ENCODE measurements at regions of chr12 and their contacts with region 1.

Region 1: GRCh38 chr12:53086361-53086760 is 7.2 kb upstream of the SPRYD3 start:
- DNase-seq: no peak
- H3K4me3 ChIP-seq: no peak overlapping the region
- H3K27ac ChIP-seq: no peak overlapping the region
- H3K4me1 ChIP-seq: no peaks in the 10 kb centered on the region
- H3K27me3 ChIP-seq: peaks cover 5 to 9% of the 10 kb centered on the region in 2 experiments
- CTCF ChIP-seq: no peak
- POLR2A ChIP-seq: no peak

Region 2: DNA sequence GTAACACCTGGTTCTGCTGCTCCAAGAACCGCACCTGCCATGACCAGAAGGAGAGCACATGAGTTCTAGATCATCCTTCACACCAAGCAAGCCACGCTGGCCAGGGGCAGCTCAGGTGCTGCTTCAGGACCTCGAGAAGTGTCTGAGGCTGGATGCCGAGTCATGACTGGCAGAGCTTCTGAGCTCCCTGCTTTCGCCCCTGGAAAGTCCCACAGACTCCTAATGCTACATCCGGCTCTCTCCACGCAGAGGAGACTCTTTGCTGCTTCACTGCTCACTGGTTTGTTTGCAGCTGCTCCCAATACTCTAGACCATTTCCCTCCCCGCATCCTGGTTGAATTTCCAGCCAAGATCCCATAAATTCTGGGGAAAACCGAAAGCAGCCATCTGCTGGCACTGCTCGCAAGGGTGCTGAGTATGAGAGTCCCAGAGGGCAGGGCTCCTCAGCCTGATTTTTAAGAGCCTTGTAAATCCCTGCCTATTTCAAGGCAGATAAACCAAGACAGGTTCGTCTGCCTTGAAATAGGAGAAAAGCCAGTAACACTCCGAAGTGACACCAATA is 435.8 kb before region 1 on chr12:
- CTCF ChIA-PET with region 1: no interaction called
- POLR2A ChIA-PET with region 1: no interaction called
- dilution Hi-C with region 1: no loop called
- intact Hi-C with region 1: no loop called
- DNase-seq: no peak
- H3K4me3 ChIP-seq: no peak overlapping the region
- H3K27ac ChIP-seq: no peak overlapping the region
- H3K4me1 ChIP-seq: no peaks in the 10 kb centered on the region
- H3K27me3 ChIP-seq: peaks cover 7 to 8% of the 10 kb centered on the region in 2 experiments
- CTCF ChIP-seq: no peak
- POLR2A ChIP-seq: no peak

Region 3: GRCh38 chr12:52836042-52836466 is 250.3 kb before region 1 on chr12:
- CTCF ChIA-PET with region 1: no interaction called
- POLR2A ChIA-PET with region 1: no interaction called
- dilution Hi-C with region 1: no loop called
- intact Hi-C with region 1: no loop called
- DNase-seq: peak; percentile 40
- H3K4me3 ChIP-seq: no peak overlapping the region
- H3K27ac ChIP-seq: no peak overlapping the region
- H3K4me1 ChIP-seq: peaks cover 4% of the 10 kb centered on the region
- H3K27me3 ChIP-seq: no peaks in the 10 kb centered on the region
- CTCF ChIP-seq: no peak
- POLR2A ChIP-seq: no peak

Region 4: DNA sequence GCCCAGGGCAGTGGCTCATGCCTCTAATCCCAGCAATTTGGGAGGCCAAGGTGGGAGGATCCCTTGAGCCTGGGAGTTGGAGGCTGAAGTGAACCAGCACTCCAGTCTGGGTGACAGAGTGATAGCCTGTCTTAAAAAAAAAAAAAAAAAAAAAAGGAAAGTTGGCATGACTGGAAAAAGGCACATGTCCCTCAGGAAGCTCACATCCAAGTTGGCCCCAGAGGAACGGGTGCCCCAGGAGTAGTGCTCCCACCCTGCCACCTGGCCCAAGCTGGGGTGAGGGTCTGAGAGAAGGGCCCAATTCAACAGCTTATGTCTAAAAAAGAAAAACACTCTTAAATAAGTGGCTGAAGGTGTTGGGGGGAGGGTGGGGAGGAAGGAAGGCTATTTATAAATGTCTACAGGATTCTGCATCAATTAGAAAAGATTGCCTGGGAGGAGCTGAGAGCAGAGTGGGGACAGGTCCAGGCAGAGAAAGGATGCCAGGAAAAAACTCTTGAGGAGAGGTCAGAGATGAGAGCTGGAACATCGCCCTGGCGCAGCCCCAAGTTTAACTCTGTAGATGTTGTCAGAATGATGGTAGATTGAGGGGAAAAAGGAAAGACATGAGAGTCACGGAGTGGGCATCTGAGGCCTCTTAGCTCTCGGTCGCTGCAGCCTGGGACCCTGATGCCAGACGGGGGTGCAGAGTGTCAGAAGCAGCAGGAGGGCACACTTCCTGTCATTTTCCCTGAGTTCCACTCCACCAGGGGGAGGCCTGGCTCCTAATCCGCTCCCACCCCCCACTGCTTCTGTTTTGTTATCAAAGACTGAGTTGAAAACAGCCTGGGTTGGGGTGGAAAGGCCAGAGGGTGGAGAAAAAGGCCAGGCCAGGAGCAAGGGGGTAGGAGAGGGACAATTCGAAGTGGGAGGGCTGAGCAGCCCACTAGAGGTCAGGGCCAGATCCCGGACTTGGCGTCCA is 14.5 kb before region 1 on chr12:
- CTCF ChIA-PET with region 1: interaction called, 91 read pairs
- POLR2A ChIA-PET with region 1: no interaction called
- dilution Hi-C with region 1: no loop called
- intact Hi-C with region 1: no loop called
- DNase-seq: peak; percentile 35
- H3K4me3 ChIP-seq: no peak overlapping the region
- H3K27ac ChIP-seq: no peak overlapping the region
- H3K4me1 ChIP-seq: peaks cover 29% of the 10 kb centered on the region
- H3K27me3 ChIP-seq: no peaks in the 10 kb centered on the region
- CTCF ChIP-seq: peak in 1 of 2 donors; percentile 26
- POLR2A ChIP-seq: no peak

Region 5: GRCh38 chr12:53234271-53234914 is 148.0 kb after region 1 on chr12:
- CTCF ChIA-PET with region 1: no interaction called
- POLR2A ChIA-PET with region 1: no interaction called
- dilution Hi-C with region 1: no loop called
- intact Hi-C with region 1: no loop called
- DNase-seq: no peak
- H3K4me3 ChIP-seq: no peak overlapping the region
- H3K27ac ChIP-seq: no peak overlapping the region
- H3K4me1 ChIP-seq: no peaks in the 10 kb centered on the region
- H3K27me3 ChIP-seq: peaks cover 19 to 22% of the 10 kb centered on the region in 2 experiments
- CTCF ChIP-seq: no peak
- POLR2A ChIP-seq: no peak